MCF 10A (cell line): ENCODE measurements at regions of chr1 and their contacts with region 1.

Region 1: DNA sequence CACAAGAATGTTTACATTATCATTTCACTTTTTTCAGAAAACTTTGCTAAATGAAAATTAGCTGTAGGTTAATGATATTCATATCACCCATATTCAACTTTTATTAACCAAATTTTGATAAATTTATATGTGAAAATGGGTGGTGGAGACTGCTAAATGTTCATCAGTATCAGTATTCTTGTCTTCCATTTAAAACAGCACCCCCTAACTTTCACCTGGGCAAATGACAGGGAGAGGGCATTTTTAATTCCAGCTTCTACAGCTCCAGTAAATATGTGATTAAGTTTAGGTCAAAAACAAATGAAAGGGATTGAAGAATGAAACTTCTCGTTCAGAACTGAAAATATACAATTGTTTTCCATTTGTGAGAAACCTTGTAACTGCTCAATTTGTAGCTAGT is 722.2 kb downstream of the KCNT2 start:
- DNase-seq: no peak
- H3K4me3 Mint-ChIP-seq: no peak overlapping the region
- H3K27ac Mint-ChIP-seq: no peak overlapping the region
- H3K4me1 Mint-ChIP-seq: peaks cover 11% of the 10 kb centered on the region
- H3K27me3 Mint-ChIP-seq: no peaks in the 10 kb centered on the region
- CTCF ChIP-seq: no peak

Region 2: DNA sequence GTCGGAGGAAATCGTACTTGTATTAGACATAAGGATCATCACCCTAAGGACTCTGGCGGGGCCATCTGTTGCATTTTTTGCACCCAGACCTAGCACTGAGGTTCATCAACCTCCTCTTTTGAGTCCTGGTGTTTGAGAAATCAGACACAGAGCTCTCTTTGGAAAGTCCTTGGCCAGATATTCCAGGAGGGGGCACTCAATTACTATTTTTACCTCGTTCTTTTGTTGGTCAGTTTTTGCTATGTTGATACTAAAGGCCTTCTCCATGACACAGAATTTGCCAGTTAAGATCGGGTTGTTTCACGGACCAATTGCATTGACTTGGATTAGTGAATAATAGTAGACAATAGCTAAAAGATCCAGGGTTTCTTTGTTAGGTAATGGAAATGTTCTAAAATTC is 11.1 kb after region 1 on chr1:
- CTCF ChIA-PET with region 1: interaction called, 16 read pairs
- POLR2A ChIA-PET with region 1: interaction called, 9 read pairs
- intact Hi-C with region 1: no loop called
- DNase-seq: peak; percentile 31
- H3K4me3 Mint-ChIP-seq: no peak overlapping the region
- H3K27ac Mint-ChIP-seq: no peak overlapping the region
- H3K4me1 Mint-ChIP-seq: peaks cover 36% of the 10 kb centered on the region
- H3K27me3 Mint-ChIP-seq: no peaks in the 10 kb centered on the region
- CTCF ChIP-seq: no peak